Activated CD4-positive, alpha-beta T cell treated with anti-CD3 and anti-CD28 coated beads for 36 hours (primary cell): ENCODE measurements at regions of chr21 and their contacts with region 1.

Region 1: GRCh38 chr21:33229784-33230544 is at the start of gene IFNAR2:
- DNase-seq: peak; percentile 85
- ATAC-seq: peak; percentile 55
- H3K4me3 Mint-ChIP-seq: peak within 1 kb of the TSS; percentile 84
- H3K27ac Mint-ChIP-seq: peak within 1 kb of the TSS; percentile 91
- H3K4me1 Mint-ChIP-seq: peaks cover 54% of the 10 kb centered on the region
- H3K27me3 Mint-ChIP-seq: no peaks in the 10 kb centered on the region
- total RNA-seq, gene IFNAR2: 26.6 to 29.8 TPM

Region 2: DNA sequence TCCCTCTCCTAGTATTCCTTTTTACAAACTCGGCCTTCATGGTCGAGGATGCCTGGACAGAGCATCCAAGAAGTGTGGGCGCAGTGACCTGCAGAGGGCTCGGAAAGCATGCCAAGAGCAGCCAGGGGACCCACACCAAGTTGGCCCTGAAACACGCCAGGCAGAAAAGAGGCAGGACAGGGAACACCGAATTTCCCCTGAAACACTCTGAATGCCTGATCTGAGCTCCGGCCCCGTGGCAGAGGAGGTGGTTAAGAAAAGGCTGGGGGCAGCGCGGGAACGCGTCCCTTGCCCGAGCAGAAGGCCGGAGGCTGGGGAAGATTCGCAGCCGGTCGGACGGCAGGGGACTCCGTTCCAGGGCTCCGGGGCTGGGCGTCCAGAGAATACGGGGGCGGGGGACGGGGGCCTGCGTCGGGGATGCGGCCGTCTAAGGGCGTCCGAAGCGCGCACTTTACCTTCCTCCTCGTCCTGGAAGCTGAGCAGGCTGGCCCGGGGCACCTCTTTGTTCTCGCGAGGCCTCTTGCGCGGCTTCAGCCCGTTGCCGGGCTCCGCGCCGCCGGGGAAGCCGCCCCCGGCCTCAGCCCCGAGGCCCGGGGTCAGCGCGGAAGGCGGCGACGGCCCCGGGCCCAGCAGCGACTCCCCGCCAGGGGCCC is 459.0 kb before region 1 on chr21:
- CTCF ChIA-PET with region 1: no interaction called
- POLR2A ChIA-PET with region 1: no interaction called
- intact Hi-C with region 1: loop called in 1 of 2 experiments (anchors 1 kb)
- DNase-seq: peak; percentile 76
- ATAC-seq: peak; percentile 17
- H3K4me3 Mint-ChIP-seq: peak overlapping the region; percentile 99
- H3K27ac Mint-ChIP-seq: peak overlapping the region; percentile 96
- H3K4me1 Mint-ChIP-seq: peaks cover 54% of the 10 kb centered on the region
- H3K27me3 Mint-ChIP-seq: no peaks in the 10 kb centered on the region

Region 3: DNA sequence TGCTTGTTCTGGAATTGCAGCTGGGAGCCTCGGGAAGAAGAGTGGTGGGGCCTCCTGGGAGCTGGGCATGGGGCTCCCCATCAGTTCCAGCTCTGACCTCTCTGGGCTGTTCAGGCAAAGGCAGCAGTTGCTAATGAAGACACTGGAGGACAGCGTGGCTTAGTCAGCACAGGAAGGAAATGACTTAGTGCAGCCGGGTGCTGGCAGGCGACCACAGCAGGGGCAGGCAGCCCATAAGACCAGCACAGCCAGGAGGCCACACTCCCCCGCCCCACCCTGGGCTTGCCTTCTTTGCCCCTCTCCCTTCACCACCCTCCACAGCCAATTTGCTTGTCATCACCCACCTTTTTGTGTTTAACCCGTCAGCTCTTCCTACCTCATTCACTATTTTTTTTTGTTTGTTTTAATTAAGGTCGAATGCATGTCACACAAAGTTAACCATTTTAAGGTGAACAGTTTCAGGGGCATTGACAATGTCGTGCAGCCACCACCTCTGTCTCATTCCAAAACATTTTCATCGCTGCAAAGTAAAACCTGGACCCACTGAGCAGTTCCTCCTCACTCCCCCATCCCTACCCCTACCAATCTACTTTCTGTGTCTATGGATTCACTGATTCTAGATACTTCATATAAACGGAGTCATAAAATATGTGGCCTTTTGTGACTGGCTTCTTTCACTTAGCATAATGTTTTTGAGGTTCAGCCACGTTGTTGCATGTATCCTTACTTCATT is 193.4 kb before region 1 on chr21:
- CTCF ChIA-PET with region 1: no interaction called
- POLR2A ChIA-PET with region 1: no interaction called
- intact Hi-C with region 1: no loop called
- DNase-seq: peak; percentile 35
- ATAC-seq: peak; percentile 81
- H3K4me3 Mint-ChIP-seq: no peak overlapping the region
- H3K27ac Mint-ChIP-seq: no peak overlapping the region
- H3K4me1 Mint-ChIP-seq: peaks cover 9% of the 10 kb centered on the region
- H3K27me3 Mint-ChIP-seq: peaks cover 27% of the 10 kb centered on the region

Region 4: GRCh38 chr21:33205476-33205875 is 24.5 kb before region 1 on chr21:
- CTCF ChIA-PET with region 1: interaction called, 3 read pairs
- POLR2A ChIA-PET with region 1: interaction called, 3 read pairs
- intact Hi-C with region 1: loop called (anchors 1 kb)
- DNase-seq: no peak
- ATAC-seq: peak; percentile 7
- H3K4me3 Mint-ChIP-seq: peak overlapping the region; percentile 6
- H3K27ac Mint-ChIP-seq: peak overlapping the region; percentile 90
- H3K4me1 Mint-ChIP-seq: peaks cover 36% of the 10 kb centered on the region
- H3K27me3 Mint-ChIP-seq: no peaks in the 10 kb centered on the region

Region 5: GRCh38 chr21:33259995-33260394 is 30.0 kb after region 1 on chr21:
- CTCF ChIA-PET with region 1: interaction called, 4 read pairs
- POLR2A ChIA-PET with region 1: interaction called, 3 read pairs
- intact Hi-C with region 1: loop called (anchors 1 to 2 kb)
- DNase-seq: no peak
- ATAC-seq: no peak
- H3K4me3 Mint-ChIP-seq: no peak overlapping the region
- H3K27ac Mint-ChIP-seq: no peak overlapping the region
- H3K4me1 Mint-ChIP-seq: peaks cover 51% of the 10 kb centered on the region
- H3K27me3 Mint-ChIP-seq: no peaks in the 10 kb centered on the region

Region 6: GRCh38 chr21:33266050-33266788 is 36.3 kb after region 1 on chr21 and contains the start of gene IL10RB:
- CTCF ChIA-PET with region 1: interaction called, 4 read pairs
- POLR2A ChIA-PET with region 1: interaction called, 4 read pairs
- intact Hi-C with region 1: loop called (anchors 1 to 5 kb)
- DNase-seq: peak; percentile 84
- ATAC-seq: peak; percentile 64
- H3K4me3 Mint-ChIP-seq: peak within 1 kb of the TSS; percentile 90
- H3K27ac Mint-ChIP-seq: peak within 1 kb of the TSS; percentile 92
- H3K4me1 Mint-ChIP-seq: peaks cover 42% of the 10 kb centered on the region
- H3K27me3 Mint-ChIP-seq: no peaks in the 10 kb centered on the region
- total RNA-seq, gene IL10RB: 22.8 to 25.0 TPM

Region 7: GRCh38 chr21:33588485-33589335 is 358.7 kb after region 1 on chr21 and contains the start of gene DONSON:
- CTCF ChIA-PET with region 1: no interaction called
- POLR2A ChIA-PET with region 1: no interaction called
- intact Hi-C with region 1: loop called in 1 of 2 experiments (anchors 5 kb)
- DNase-seq: peak; percentile 93
- ATAC-seq: peak; percentile 92
- H3K4me3 Mint-ChIP-seq: peak within 1 kb of the TSS; percentile 91
- H3K27ac Mint-ChIP-seq: peak within 1 kb of the TSS; percentile 87
- H3K4me1 Mint-ChIP-seq: peaks cover 19% of the 10 kb centered on the region
- H3K27me3 Mint-ChIP-seq: no peaks in the 10 kb centered on the region
- total RNA-seq, gene DONSON: 39.5 to 41.8 TPM